GM10248 (cell line): ENCODE measurements at regions of chr18 and their contacts with region 1.

Region 1: DNA sequence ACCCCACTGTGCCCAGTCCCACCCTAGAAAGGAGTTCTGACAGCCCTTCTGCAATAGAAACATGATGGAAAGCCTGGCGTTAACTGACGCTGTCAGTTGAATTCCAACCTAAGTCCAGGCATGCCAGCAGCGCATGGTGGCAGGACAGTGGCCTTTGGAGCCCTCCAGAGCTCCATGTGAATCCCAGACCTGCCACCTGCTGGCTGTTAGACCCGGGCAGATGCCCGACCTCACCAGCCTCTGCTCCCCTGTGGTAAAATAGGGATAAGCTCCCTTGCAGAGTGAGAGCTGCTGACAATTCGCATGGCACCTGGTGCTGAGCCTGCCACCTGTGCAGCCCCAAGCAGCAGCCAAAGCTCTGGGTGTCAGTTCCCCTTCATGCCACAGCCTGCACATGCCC is 138.6 kb downstream of the LOXHD1 start:
- DNase-seq: no peak
- CTCF ChIP-seq: no peak

Region 2: GRCh38 chr18:46506974-46507373 is 11.5 kb before region 1 on chr18:
- CTCF ChIA-PET with region 1: interaction called, 10 read pairs
- POLR2A ChIA-PET with region 1: no interaction called
- DNase-seq: no peak
- CTCF ChIP-seq: no peak

Region 3: GRCh38 chr18:46672062-46672970 is 153.9 kb after region 1 on chr18:
- CTCF ChIA-PET with region 1: no interaction called
- POLR2A ChIA-PET with region 1: no interaction called
- DNase-seq: no peak
- CTCF ChIP-seq: no peak